ENCODE measurements at regions of chr11 and their contacts with region 1.

Region 1: GRCh38 chr11:126062679-126063506 is at the start of gene CDON:
- DNase-seq: peak; percentile 96
- H3K4me3 ChIP-seq: peak within 1 kb of the TSS; percentile 73 to 94 (median 82)
- H3K27ac ChIP-seq: peak within 1 kb of the TSS; percentile 83 to 95 (median 92)
- H3K4me1 ChIP-seq: peaks cover 0 to 42% (median 32%) of the 10 kb centered on the region in 4 donors
- H3K27me3 ChIP-seq: no peaks in the 10 kb centered on the region
- CTCF ChIP-seq: no peak
- EP300 ChIP-seq: peak in 1 of 4 donors; percentile 15
- POLR2A ChIP-seq: no peak
- total RNA-seq, gene CDON: 48.9 to 88.1 (median 66.3) TPM

Region 2: DNA sequence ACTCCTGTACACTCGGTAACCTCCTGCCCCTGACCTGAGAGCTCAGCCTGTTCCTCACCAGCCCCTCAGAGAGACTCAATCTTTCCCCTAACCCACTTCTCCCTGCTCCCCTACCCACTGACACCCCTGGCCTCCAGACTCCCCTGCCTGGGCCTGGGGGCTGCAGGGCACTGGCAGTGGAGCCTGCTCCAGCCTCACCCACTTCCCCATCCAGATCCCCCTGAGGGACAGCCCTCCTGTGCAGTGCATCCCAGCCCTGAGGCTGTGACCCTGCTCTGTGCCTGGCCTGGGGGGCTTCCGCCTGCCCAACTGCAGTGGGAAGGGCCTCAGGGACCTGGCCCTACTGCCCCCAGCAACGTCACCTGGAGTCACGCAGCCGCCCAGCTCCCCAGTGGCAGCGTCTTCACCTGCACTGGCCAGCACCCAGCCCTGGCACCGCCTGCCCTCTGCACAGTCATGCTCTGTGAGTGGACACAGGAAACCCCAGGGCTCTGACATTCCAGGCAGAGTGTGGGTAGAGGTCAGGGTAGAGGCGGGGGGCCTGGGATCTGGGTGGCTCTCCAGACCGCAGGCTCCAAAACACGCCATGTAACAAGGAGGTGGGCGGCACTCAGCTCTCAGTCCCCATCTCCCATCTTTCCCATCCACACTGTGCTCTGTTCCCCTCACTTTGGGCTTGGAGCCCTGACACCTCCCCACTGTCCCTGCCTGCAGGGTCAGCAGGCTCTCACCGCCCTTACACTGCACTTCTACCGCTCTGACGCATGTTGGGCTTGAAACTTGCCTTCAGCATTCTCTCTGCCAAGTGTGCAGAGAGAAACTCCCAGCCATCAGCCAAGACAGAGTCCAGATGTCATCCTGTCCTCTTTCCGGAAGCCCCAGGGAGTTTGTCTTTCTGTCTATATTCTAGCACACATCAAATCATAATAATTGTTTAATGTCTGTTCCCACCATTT is 111.9 kb before region 1 on chr11:
- intact Hi-C with region 1: loop called (anchors 2 kb)
- DNase-seq: peak; percentile 96
- H3K4me3 ChIP-seq: no peak overlapping the region
- H3K27ac ChIP-seq: peak overlapping the region; percentile 32 to 78 (median 74)
- H3K4me1 ChIP-seq: peaks cover 2 to 36% (median 32%) of the 10 kb centered on the region in 4 donors
- H3K27me3 ChIP-seq: no peaks in the 10 kb centered on the region
- CTCF ChIP-seq: no peak
- EP300 ChIP-seq: peak in 3 of 4 donors; percentile 68 to 84 (median 77)
- POLR2A ChIP-seq: no peak

Region 3: GRCh38 chr11:126115816-126116331 is 53.0 kb after region 1 on chr11:
- intact Hi-C with region 1: loop called (anchors 1 kb)
- DNase-seq: peak; percentile 92
- H3K4me3 ChIP-seq: no peak overlapping the region
- H3K27ac ChIP-seq: peak overlapping the region; percentile 85 to 91 (median 89)
- H3K4me1 ChIP-seq: peaks cover 0 to 63% (median 60%) of the 10 kb centered on the region in 4 donors
- H3K27me3 ChIP-seq: no peaks in the 10 kb centered on the region
- CTCF ChIP-seq: peak in 3 of 4 experiments; percentile 8 to 33 (median 28)
- EP300 ChIP-seq: peak in 2 of 4 donors; percentile 74 to 77
- POLR2A ChIP-seq: no peak

Region 4: GRCh38 chr11:126163074-126163700 is 100.3 kb after region 1 on chr11:
- intact Hi-C with region 1: loop called (anchors 5 kb)
- DNase-seq: peak; percentile 87
- H3K4me3 ChIP-seq: no peak overlapping the region
- H3K27ac ChIP-seq: peak overlapping the region; percentile 33 to 84 (median 56)
- H3K4me1 ChIP-seq: peaks cover 2 to 58% (median 46%) of the 10 kb centered on the region in 4 donors
- H3K27me3 ChIP-seq: no peaks in the 10 kb centered on the region
- CTCF ChIP-seq: no peak
- EP300 ChIP-seq: peak in 2 of 4 donors; percentile 33 to 90
- POLR2A ChIP-seq: no peak

Region 5: GRCh38 chr11:126268708-126269579 is 206.1 kb after region 1 on chr11 and contains the starts of genes FOXRED1 and SRPRA:
- intact Hi-C with region 1: loop called (anchors 5 kb)
- DNase-seq: peak; percentile 100
- H3K4me3 ChIP-seq: peak within 1 kb of the TSS; percentile 74 to 91 (median 80)
- H3K27ac ChIP-seq: peak within 1 kb of the TSS; percentile 82 to 92 (median 90)
- H3K4me1 ChIP-seq: peaks cover 0 to 24% (median 16%) of the 10 kb centered on the region in 4 donors
- H3K27me3 ChIP-seq: no peaks in the 10 kb centered on the region
- CTCF ChIP-seq: no peak
- EP300 ChIP-seq: peak in 2 of 4 donors; percentile 75 to 79
- POLR2A ChIP-seq: peak; percentile 70 to 75
- total RNA-seq, gene FOXRED1: 14.5 to 46.0 (median 15.3) TPM
- total RNA-seq, gene SRPRA: 51.0 to 66.5 (median 57.2) TPM

Region 6: DNA sequence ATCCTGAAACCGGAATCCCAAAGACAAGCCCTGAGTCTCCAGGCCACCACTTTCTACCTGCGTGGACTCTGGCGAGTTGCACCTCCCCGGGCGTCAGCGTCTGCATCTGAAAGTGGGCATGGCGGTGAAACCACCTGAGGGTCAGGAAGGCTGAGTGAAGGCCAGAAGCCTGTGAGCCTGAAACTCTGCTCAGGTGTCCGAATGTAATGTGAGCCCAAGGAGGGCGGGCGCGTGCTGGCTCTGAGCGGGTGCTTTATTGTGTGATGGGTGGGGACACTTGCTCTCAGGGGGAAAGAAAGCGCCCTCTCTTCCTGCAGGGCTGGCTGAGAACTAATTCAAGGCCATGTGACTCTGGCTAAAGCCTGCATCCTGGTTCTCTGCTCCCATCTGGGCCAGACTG is 428.2 kb after region 1 on chr11:
- intact Hi-C with region 1: no loop called
- DNase-seq: peak; percentile 40
- H3K4me3 ChIP-seq: no peak overlapping the region
- H3K27ac ChIP-seq: no peak overlapping the region
- H3K4me1 ChIP-seq: peaks cover 0 to under 1% (median 0%) of the 10 kb centered on the region in 4 donors
- H3K27me3 ChIP-seq: no peaks in the 10 kb centered on the region
- CTCF ChIP-seq: no peak
- EP300 ChIP-seq: no peak
- POLR2A ChIP-seq: no peak

Measured in sigmoid colon (tissue), 7 donors.